ENCODE measurements at regions of chr15 and their contacts with region 1.

Region 1: GRCh38 chr15:90648137-90649070 is 68.7 kb upstream of the BLM start:
- DNase-seq: peak; percentile 89
- ATAC-seq: peak; percentile 80
- H3K4me3 Mint-ChIP-seq: peak overlapping the region; percentile 64
- H3K27ac Mint-ChIP-seq: peak overlapping the region; percentile 99
- H3K4me1 Mint-ChIP-seq: peaks cover 51% of the 10 kb centered on the region
- H3K27me3 Mint-ChIP-seq: no peaks in the 10 kb centered on the region

Region 2: DNA sequence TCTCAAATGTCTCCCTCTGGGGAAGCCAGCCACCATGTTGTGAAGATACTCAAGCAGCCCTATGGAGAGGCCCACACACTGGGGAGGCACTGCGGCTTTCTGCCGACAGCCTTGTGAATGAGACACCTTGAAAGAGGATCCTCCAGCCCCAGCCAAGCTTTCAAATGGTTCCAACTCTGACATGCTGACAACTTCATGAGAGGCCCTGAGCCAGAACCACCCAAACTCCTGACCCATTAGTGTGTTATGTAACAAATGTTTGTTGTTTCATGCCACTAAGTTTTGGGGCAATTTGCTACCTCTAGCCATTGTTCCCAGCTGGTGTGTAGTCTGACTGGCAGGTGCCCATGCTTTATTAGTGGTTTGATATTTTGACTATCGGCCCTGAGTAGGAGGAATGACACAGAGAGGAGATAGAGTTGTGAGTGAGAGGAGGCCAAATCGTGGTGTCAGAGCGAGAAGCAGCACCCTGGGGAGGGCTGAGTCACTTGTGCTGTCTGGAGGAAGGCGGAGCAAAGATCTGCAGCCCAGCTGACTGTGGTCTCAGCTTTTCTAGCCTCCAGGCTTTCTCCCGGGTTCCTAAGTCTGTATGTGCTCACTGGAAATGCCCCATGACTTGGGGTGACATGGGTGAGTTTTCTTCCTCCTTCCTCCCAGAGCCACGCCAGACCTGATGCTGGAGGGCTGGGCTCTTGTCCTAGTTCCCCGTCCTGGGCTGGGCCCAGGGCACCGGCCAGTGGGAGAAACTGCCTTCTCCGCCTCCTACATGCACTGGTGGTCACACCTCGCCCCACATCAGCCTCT is 12.0 kb after region 1 on chr15:
- CTCF ChIA-PET with region 1: interaction called, 28 read pairs
- POLR2A ChIA-PET with region 1: interaction called, 17 read pairs
- DNase-seq: peak; percentile 85
- ATAC-seq: peak; percentile 76
- H3K4me3 Mint-ChIP-seq: peak overlapping the region; percentile 68
- H3K27ac Mint-ChIP-seq: peak overlapping the region; percentile 85
- H3K4me1 Mint-ChIP-seq: peaks cover 88% of the 10 kb centered on the region
- H3K27me3 Mint-ChIP-seq: no peaks in the 10 kb centered on the region

Region 3: DNA sequence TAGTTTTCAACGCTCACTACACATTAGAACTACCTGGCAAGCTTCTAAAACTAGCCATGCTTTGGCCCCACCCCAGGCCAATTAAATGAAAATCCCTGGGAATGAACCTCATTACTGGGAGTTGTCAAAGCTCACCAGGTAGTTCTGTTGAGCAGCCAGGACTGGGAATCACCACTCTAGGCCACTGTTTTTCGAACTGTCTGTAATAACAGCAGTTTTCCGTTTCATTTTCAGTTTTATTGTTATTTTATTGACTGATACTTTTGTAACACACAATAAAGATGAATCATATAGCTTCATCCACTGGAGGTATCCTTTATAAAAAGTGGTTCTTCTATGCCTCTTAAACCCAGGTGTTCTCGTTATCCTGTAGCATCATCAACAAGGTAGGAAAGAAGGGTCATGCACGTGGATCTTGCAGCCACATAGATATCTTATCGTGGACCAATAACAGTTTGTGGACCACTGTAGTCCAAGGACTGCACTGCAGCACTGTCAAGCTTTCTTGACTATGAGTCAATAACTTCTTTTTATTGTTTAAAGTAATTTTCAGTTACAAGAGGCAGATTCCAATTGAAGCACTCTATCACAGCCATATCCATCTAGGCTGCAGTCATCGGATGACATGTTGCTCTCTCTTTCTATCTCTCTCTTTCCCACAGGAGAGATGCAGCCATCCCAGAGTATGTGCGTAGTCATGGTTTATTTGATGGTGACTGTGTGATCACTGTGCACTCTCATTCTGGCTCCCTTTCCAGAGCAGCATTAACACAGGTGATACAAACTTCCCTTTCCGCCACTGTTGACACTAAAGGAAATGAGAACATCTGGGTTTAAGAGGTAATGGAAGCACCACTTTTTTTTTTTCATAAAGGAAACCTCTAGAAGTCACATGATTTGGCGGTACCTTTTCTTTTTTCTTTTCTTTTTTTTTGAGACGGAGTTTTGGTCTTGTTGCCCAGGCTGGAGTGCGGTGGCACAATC is 29.7 kb after region 1 on chr15:
- CTCF ChIA-PET with region 1: interaction called, 11 read pairs
- POLR2A ChIA-PET with region 1: interaction called, 5 read pairs
- DNase-seq: peak; percentile 42
- ATAC-seq: peak; percentile 81
- H3K4me3 Mint-ChIP-seq: peak overlapping the region; percentile 52
- H3K27ac Mint-ChIP-seq: peak overlapping the region; percentile 92
- H3K4me1 Mint-ChIP-seq: peaks cover 52% of the 10 kb centered on the region
- H3K27me3 Mint-ChIP-seq: peaks cover 3% of the 10 kb centered on the region

Region 4: GRCh38 chr15:90691982-90692773 is 43.8 kb after region 1 on chr15:
- CTCF ChIA-PET with region 1: interaction called, 19 read pairs
- POLR2A ChIA-PET with region 1: interaction called, 4 read pairs
- DNase-seq: no peak
- ATAC-seq: peak; percentile 52
- H3K4me3 Mint-ChIP-seq: no peak overlapping the region
- H3K27ac Mint-ChIP-seq: peak overlapping the region; percentile 66
- H3K4me1 Mint-ChIP-seq: peaks cover 60% of the 10 kb centered on the region
- H3K27me3 Mint-ChIP-seq: no peaks in the 10 kb centered on the region

Region 5: GRCh38 chr15:90716976-90717821 is 68.8 kb after region 1 on chr15 and contains the start of gene BLM:
- CTCF ChIA-PET with region 1: interaction called, 9 read pairs
- POLR2A ChIA-PET with region 1: interaction called, 24 read pairs
- DNase-seq: peak; percentile 97
- ATAC-seq: peak; percentile 99
- H3K4me3 Mint-ChIP-seq: peak within 1 kb of the TSS; percentile 81
- H3K27ac Mint-ChIP-seq: peak within 1 kb of the TSS; percentile 94
- H3K4me1 Mint-ChIP-seq: peaks cover 25% of the 10 kb centered on the region
- H3K27me3 Mint-ChIP-seq: no peaks in the 10 kb centered on the region
- total RNA-seq, gene BLM: 52.3 to 57.4 TPM

Region 6: GRCh38 chr15:90860942-90861675 is 212.7 kb after region 1 on chr15:
- CTCF ChIA-PET with region 1: no interaction called
- POLR2A ChIA-PET with region 1: no interaction called
- DNase-seq: no peak
- ATAC-seq: no peak
- H3K4me3 Mint-ChIP-seq: no peak overlapping the region
- H3K27ac Mint-ChIP-seq: no peak overlapping the region
- H3K4me1 Mint-ChIP-seq: peaks cover 42% of the 10 kb centered on the region
- H3K27me3 Mint-ChIP-seq: no peaks in the 10 kb centered on the region

Measured in activated CD8-positive, alpha-beta T cell treated with anti-CD3 and anti-CD28 coated beads, Interleukin-2, amount 10 ng/mL, durations not matched to agents 7 days and 5 days (primary cell).